ENCODE measurements at regions of chr1 and their contacts with region 1.

Region 1: GRCh38 chr1:15272009-15272788 is 25.2 kb downstream of the FHAD1 start:
- DNase-seq: no peak
- H3K4me3 ChIP-seq: peak overlapping the region in 1 of 4 donors; percentile 4
- H3K27ac ChIP-seq: no peak overlapping the region
- H3K4me1 ChIP-seq: peaks cover 0 to 10% (median 0%) of the 10 kb centered on the region in 3 donors
- H3K27me3 ChIP-seq: peaks cover 0 to 6% (median 0%) of the 10 kb centered on the region in 4 donors
- CTCF ChIP-seq: peak in 5 of 6 experiments; percentile 74 to 91 (median 79)
- POLR2A ChIP-seq: no peak

Region 2: DNA sequence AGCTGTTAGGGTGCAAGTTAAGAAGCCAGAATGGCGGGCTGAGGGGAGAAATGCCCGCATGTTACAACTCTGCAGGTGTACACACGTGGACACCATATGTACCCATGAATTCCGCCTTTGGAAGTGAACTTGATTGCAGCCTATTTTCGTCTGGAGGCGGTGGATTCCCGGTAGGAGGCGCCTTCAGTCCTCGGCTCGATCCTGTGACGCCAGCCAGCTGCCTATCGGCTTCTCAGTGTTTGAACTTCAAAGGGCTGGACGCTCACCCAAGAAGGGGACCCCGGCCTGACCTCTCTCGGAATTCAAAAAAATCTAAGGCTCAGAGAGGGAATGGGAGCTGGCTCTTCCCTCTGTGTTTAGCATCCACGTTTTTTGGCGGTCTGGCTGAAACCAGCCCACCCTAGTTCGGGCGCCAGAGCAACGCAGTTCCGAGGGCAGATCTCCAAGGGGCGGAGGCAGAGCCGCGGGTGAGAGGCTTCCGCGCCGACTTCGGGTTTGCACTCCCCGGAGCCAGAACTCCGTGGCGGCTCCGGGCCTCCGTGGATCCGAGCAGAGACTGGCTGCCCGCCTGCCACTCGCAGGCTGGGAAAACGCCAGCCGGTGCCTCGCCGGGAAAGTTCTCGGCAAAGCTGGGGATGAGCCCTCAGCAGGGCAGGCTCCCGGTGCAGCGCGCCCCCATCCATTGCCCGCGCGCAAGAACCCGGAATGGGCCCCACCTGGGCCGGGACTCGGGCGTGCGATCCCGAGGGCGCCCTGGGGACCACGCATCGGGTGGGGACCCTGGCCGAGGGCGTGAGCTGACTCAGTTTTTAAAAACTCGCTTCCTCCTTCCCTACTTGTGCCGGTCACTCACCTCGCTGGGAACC is 119.6 kb before region 1 on chr1:
- intact Hi-C with region 1: loop called (anchors 10 kb)
- DNase-seq: no peak
- H3K4me3 ChIP-seq: peak overlapping the region; percentile 62 to 85 (median 75)
- H3K27ac ChIP-seq: peak overlapping the region; percentile 91 to 93 (median 92)
- H3K4me1 ChIP-seq: peaks cover 13 to 59% (median 25%) of the 10 kb centered on the region in 3 donors
- H3K27me3 ChIP-seq: peaks cover 0 to 18% (median 0%) of the 10 kb centered on the region in 4 donors
- CTCF ChIP-seq: peak; percentile 41 to 75 (median 68)
- POLR2A ChIP-seq: peak in 2 of 4 donors; percentile 47 to 63